Activated T-helper 1 cell treated with anti-CD3 and anti-CD28 coated beads, Interleukin-12 subunit alpha, Interleukin-12 subunit beta, Interleukin-2, Interleukin-4 antibody, amounts not matched to agents 30 ng/mL and 10 ng/mL and 1 ng/mL, durations not matched to agents 14 hours and 24 hours and 36 hours (primary cell): ENCODE measurements at regions of chr6 and their contacts with region 1.

Region 1: DNA sequence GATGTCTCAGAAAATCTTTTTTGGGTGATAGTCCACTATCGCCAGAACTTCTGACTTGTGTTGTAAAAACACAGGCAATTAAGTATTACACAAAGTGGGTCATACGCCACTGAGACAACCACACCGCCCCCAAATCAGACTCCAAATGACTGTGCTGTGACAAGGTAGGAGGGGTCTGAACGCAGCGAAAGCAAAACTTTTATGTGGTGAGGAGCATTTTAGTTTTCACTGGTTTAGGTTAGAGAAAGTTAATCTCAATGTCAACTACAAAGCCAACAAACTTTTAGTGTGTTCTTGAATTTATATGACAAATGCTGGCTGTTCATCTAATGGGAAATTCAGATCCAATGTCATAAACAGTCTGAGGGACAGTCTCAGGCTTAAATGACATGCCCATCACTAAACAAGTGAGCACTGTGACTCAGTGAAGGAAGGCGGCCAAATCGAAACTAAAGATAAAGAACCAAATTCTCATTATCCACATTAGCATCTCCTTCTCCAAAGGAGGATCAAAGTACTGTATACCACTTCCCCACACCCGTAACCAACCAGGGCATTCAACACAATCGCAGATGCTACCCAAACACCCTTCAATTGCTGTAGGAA is 186.7 kb downstream of the GJA10 start:
- DNase-seq: peak; percentile 76
- H3K4me3 Mint-ChIP-seq: peak overlapping the region; percentile 88
- H3K27ac Mint-ChIP-seq: peak overlapping the region; percentile 95
- H3K4me1 Mint-ChIP-seq: peaks cover 96% of the 10 kb centered on the region
- H3K27me3 Mint-ChIP-seq: no peaks in the 10 kb centered on the region

Region 2: GRCh38 chr6:89371849-89372505 is 709.0 kb before region 1 on chr6:
- intact Hi-C with region 1: loop called (anchors 10 kb)
- DNase-seq: peak; percentile 75
- H3K4me3 Mint-ChIP-seq: peak overlapping the region; percentile 49
- H3K27ac Mint-ChIP-seq: peak overlapping the region; percentile 59
- H3K4me1 Mint-ChIP-seq: peaks cover 46% of the 10 kb centered on the region
- H3K27me3 Mint-ChIP-seq: no peaks in the 10 kb centered on the region

Region 3: GRCh38 chr6:90000864-90001731 is 79.9 kb before region 1 on chr6:
- intact Hi-C with region 1: loop called (anchors 2 kb)
- DNase-seq: no peak
- H3K4me3 Mint-ChIP-seq: no peak overlapping the region
- H3K27ac Mint-ChIP-seq: no peak overlapping the region
- H3K4me1 Mint-ChIP-seq: no peaks in the 10 kb centered on the region
- H3K27me3 Mint-ChIP-seq: no peaks in the 10 kb centered on the region

Region 4: GRCh38 chr6:90103056-90103800 is 22.2 kb after region 1 on chr6:
- intact Hi-C with region 1: loop called (anchors 1 kb)
- DNase-seq: no peak
- H3K4me3 Mint-ChIP-seq: peak overlapping the region; percentile 79
- H3K27ac Mint-ChIP-seq: peak overlapping the region; percentile 88
- H3K4me1 Mint-ChIP-seq: peaks cover 70% of the 10 kb centered on the region
- H3K27me3 Mint-ChIP-seq: no peaks in the 10 kb centered on the region

Region 5: DNA sequence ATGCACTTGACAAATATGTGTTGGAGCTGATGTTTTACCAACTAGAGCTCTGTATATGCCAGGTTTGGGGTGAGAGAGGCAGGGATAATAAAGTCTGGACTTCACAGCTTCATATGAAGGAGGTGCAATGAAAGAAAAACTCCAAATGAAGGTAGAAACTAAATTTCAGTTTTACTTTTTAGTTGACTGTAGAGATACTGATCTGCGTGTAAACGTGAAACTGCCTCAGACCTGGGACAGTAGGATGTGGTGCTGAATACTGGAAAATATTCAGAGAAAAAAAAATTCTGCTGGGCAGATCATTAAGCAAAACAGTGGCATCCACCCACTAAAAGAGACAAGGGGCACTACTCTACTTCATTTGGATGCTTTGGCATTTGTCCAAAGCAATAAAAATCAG is 121.2 kb after region 1 on chr6:
- intact Hi-C with region 1: loop called (anchors 1 kb)
- DNase-seq: no peak
- H3K4me3 Mint-ChIP-seq: peak overlapping the region; percentile 71
- H3K27ac Mint-ChIP-seq: peak overlapping the region; percentile 85
- H3K4me1 Mint-ChIP-seq: peaks cover 43% of the 10 kb centered on the region
- H3K27me3 Mint-ChIP-seq: no peaks in the 10 kb centered on the region

Region 6: DNA sequence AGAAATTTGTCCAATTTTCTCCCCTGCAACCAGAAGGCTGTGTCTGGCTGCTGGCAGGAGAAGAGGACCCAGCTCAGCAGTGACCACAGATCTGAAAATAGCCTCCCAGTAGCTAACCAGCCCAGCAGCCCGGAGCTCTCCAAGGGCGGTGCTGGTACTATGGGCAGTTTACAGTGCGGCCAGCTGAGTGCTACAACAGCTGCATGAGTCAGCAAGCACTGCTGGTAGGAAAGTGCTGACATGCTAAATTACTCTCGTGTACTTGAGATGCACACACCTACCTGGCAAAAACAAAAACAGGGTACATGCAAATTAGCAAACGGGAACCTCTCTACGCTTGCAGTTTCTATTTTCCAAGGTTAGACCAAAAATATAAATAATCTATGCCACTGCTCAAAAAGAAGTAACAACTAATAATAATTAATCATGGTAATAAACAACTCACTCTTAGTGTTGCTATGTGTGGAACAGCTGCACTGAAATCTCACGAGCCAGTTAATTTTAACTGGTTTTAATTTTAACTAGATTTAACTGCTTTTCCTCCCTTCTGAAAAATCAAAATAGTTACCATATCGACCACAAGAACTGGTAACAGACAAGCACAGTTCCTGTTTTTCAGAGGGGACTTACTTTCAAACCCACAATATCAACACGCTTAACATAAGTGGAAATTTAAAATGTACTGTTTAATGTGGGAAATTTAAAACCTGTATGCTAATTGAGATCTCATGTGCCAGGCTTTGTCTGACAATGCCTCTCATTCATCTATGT is 204.8 kb after region 1 on chr6:
- intact Hi-C with region 1: loop called (anchors 1 kb)
- DNase-seq: peak; percentile 47
- H3K4me3 Mint-ChIP-seq: peak overlapping the region; percentile 79
- H3K27ac Mint-ChIP-seq: peak overlapping the region; percentile 97
- H3K4me1 Mint-ChIP-seq: peaks cover 89% of the 10 kb centered on the region
- H3K27me3 Mint-ChIP-seq: peaks cover 3% of the 10 kb centered on the region

Region 7: GRCh38 chr6:90458353-90459224 is 377.6 kb after region 1 on chr6:
- intact Hi-C with region 1: loop called (anchors 1 kb)
- DNase-seq: peak; percentile 66
- H3K4me3 Mint-ChIP-seq: peak overlapping the region; percentile 47
- H3K27ac Mint-ChIP-seq: peak overlapping the region; percentile 93
- H3K4me1 Mint-ChIP-seq: peaks cover 65% of the 10 kb centered on the region
- H3K27me3 Mint-ChIP-seq: no peaks in the 10 kb centered on the region